MCF 10A (cell line): ENCODE measurements at regions of chr14 and their contacts with region 1.

Region 1: DNA sequence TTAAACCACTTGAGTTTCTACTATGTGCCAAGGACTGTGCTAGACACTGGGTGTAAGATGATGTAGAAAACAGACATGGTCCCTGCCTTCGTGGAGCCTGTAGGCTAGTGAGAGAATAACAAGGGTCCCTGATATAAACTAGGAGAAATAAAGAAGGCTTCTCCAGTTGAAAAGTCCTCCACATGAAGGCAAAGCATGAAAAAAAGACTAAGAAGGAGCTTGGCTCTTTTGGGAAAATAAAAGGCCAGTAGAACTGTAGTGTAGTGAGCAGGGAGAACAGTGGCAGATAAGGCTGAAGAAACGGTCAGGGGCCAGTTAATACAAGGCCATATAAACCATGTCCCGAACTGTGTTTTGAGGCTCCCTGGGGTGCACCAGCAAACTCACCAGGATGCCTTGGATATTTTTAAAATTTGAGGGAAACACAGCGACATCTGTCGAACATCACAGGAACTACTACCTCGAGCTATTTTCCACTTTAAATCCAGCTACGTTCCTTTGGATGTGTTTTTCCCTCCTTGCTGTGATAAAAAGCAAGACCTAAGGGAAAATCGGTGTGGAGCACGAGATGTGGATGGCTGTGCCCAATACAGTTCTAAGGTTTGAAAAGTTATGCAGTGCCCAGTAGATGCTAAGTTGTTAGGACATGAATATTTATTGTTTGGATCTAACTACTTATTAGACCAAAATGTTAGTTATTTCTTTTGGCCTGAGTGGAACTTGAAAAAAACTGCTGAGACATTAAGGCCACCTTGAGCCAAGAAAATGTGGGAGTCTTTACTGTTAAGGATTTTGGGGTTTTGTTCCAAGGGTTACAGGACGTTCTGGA is 8.5 kb upstream of the CFL2 start:
- DNase-seq: peak; percentile 63
- H3K4me3 Mint-ChIP-seq: no peak overlapping the region
- H3K27ac Mint-ChIP-seq: no peak overlapping the region
- H3K4me1 Mint-ChIP-seq: peaks cover 10% of the 10 kb centered on the region
- H3K27me3 Mint-ChIP-seq: no peaks in the 10 kb centered on the region
- CTCF ChIP-seq: peak; percentile 79

Region 2: DNA sequence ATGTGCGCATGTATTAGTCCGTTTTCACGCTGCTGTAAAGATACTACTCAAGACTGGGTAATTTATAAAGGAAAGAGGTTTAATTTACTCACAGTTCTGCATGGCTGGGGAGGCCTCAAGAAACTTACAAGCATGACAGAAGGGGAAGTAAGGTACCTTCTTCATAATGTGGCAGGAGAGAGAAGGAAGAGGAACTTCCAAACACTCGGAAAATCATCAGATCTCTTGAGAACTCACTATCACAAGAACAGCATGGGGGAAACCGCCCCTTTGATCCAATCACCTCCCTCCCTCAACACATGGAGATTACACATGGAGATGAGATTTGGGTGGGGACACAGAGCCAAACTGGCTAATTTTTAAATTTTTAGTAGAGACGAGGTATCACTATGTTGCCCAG is 51.2 kb before region 1 on chr14:
- CTCF ChIA-PET with region 1: interaction called, 126 read pairs
- POLR2A ChIA-PET with region 1: interaction called, 15 read pairs
- intact Hi-C with region 1: loop called (anchors 1 kb)
- DNase-seq: no peak
- H3K4me3 Mint-ChIP-seq: no peak overlapping the region
- H3K27ac Mint-ChIP-seq: no peak overlapping the region
- H3K4me1 Mint-ChIP-seq: no peaks in the 10 kb centered on the region
- H3K27me3 Mint-ChIP-seq: no peaks in the 10 kb centered on the region
- CTCF ChIP-seq: no peak

Region 3: DNA sequence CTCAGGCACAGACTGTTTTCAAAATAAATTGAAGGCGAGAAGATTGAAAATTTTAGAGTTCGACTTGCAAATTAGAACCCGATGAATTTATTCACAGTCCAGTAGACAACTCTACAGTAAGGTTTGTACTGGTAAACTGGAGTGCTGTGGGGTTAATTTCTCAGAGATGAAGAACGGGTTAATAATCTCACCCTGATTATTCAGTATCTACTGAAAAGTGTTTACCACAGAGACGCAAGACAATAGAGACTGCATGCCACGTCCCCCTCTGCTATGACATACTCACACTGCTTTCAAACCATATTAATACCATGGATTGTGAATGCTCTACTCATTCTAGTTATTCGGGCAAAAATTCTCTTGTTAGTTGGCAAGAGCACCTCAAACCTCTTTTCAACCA is 44.6 kb before region 1 on chr14:
- CTCF ChIA-PET with region 1: interaction called, 126 read pairs
- POLR2A ChIA-PET with region 1: interaction called, 15 read pairs
- intact Hi-C with region 1: no loop called
- DNase-seq: no peak
- H3K4me3 Mint-ChIP-seq: peak overlapping the region; percentile 7
- H3K27ac Mint-ChIP-seq: peak overlapping the region; percentile 56
- H3K4me1 Mint-ChIP-seq: peaks cover 10% of the 10 kb centered on the region
- H3K27me3 Mint-ChIP-seq: no peaks in the 10 kb centered on the region
- CTCF ChIP-seq: no peak

Region 4: GRCh38 chr14:34693228-34693939 is 29.5 kb before region 1 on chr14:
- CTCF ChIA-PET with region 1: interaction called, 11 read pairs
- POLR2A ChIA-PET with region 1: interaction called, 4 read pairs
- intact Hi-C with region 1: no loop called
- DNase-seq: peak; percentile 29
- H3K4me3 Mint-ChIP-seq: no peak overlapping the region
- H3K27ac Mint-ChIP-seq: peak overlapping the region; percentile 18
- H3K4me1 Mint-ChIP-seq: peaks cover 9% of the 10 kb centered on the region
- H3K27me3 Mint-ChIP-seq: no peaks in the 10 kb centered on the region
- CTCF ChIP-seq: no peak

Region 5: GRCh38 chr14:34699873-34700621 is 22.9 kb before region 1 on chr14:
- CTCF ChIA-PET with region 1: interaction called, 21 read pairs
- POLR2A ChIA-PET with region 1: interaction called, 6 read pairs
- intact Hi-C with region 1: no loop called
- DNase-seq: peak; percentile 80
- H3K4me3 Mint-ChIP-seq: peak overlapping the region; percentile 37
- H3K27ac Mint-ChIP-seq: peak overlapping the region; percentile 77
- H3K4me1 Mint-ChIP-seq: peaks cover 15% of the 10 kb centered on the region
- H3K27me3 Mint-ChIP-seq: no peaks in the 10 kb centered on the region
- CTCF ChIP-seq: no peak

Region 6: GRCh38 chr14:34733235-34733634 is 10.3 kb after region 1 on chr14:
- CTCF ChIA-PET with region 1: interaction called, 31 read pairs
- POLR2A ChIA-PET with region 1: no interaction called
- intact Hi-C with region 1: no loop called
- DNase-seq: no peak
- H3K4me3 Mint-ChIP-seq: no peak overlapping the region
- H3K27ac Mint-ChIP-seq: no peak overlapping the region
- H3K4me1 Mint-ChIP-seq: no peaks in the 10 kb centered on the region
- H3K27me3 Mint-ChIP-seq: no peaks in the 10 kb centered on the region
- CTCF ChIP-seq: no peak